PC-9 (cell line): ENCODE measurements at regions of chr9 and their contacts with region 1.

Region 1: DNA sequence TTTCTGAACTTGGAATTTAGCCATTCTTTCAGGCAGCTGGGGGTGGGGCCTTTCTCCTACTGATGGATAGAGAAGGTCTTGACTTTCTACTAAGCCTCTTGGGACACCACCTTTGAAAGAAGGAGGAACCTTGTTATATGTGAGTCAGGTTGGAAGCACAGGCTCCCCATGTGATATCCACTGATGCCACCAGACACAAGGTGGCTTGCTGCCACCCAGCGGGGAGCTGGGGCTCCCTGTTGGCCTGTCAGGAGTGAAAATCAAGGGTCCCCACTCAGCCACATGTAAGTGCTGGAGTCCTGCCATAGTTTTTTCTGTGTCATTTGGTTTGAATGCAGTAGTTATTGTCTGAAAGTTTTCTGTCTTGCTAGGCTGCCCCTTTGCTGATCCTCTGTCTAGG is 252.4 kb upstream of the NFIL3 start:
- DNase-seq: peak; percentile 51 to 64
- H3K4me3 ChIP-seq: no peak overlapping the region
- H3K27ac ChIP-seq: no peak overlapping the region
- H3K4me1 ChIP-seq: no peaks in the 10 kb centered on the region
- H3K27me3 ChIP-seq: no peaks in the 10 kb centered on the region
- CTCF ChIP-seq: peak; percentile 74

Region 2: DNA sequence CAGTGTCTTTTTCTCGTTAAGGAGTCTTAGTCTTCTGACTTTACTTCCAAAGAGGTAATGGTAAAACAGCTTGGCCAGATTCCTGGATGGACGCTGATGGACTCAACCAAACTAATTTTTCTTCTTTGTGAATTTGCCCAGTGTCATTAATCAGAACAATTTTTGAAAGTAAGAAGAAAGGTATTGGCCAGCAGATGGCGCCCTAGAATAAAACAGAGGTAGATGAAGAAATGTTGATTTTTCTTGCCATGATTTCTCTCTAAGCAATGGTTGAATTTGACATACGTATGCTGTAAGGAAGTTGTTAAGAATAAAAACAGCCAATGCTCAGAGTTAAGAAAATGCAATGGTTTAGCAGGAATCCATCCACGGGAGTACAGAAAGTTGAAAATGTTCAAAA is 1533.5 kb before region 1 on chr9:
- CTCF ChIA-PET with region 1: no interaction called
- POLR2A ChIA-PET with region 1: no interaction called
- intact Hi-C with region 1: loop called (anchors 5 kb)
- DNase-seq: peak in 1 of 2 experiments; percentile 36
- H3K4me3 ChIP-seq: no peak overlapping the region
- H3K27ac ChIP-seq: no peak overlapping the region
- H3K4me1 ChIP-seq: no peaks in the 10 kb centered on the region
- H3K27me3 ChIP-seq: peaks cover 19% of the 10 kb centered on the region
- CTCF ChIP-seq: peak; percentile 71

Region 3: GRCh38 chr9:91089405-91090129 is 586.5 kb before region 1 on chr9:
- CTCF ChIA-PET with region 1: no interaction called
- POLR2A ChIA-PET with region 1: no interaction called
- intact Hi-C with region 1: loop called (anchors 1 kb)
- DNase-seq: peak in 1 of 2 experiments; percentile 21
- H3K4me3 ChIP-seq: no peak overlapping the region
- H3K27ac ChIP-seq: no peak overlapping the region
- H3K4me1 ChIP-seq: no peaks in the 10 kb centered on the region
- H3K27me3 ChIP-seq: no peaks in the 10 kb centered on the region
- CTCF ChIP-seq: peak; percentile 47

Region 4: DNA sequence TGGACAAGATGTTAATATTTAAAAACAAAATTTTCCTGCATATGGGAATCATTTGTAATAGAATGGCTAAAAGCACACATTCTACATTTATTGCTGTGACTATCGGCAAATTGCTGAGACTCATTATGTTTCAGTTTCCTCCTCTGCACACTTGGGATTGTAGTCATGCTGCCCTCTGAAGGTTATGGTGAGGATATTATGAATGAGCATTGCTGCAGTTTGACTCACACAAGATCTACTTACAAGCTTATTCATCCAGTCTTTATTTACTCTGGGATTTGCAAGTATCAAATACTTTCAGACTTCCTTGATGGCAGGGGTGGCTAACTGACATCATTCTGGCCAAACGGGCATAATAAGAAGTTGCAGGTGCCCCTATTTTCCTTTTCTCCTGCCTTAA is 242.9 kb before region 1 on chr9:
- CTCF ChIA-PET with region 1: interaction called, 3 read pairs
- POLR2A ChIA-PET with region 1: no interaction called
- intact Hi-C with region 1: loop called (anchors 5 kb)
- DNase-seq: peak; percentile 38 to 96
- H3K4me3 ChIP-seq: no peak overlapping the region
- H3K27ac ChIP-seq: peak overlapping the region; percentile 32; the same call in 1 of the 2 replicates
- H3K4me1 ChIP-seq: peaks cover 8% of the 10 kb centered on the region; the same call in 1 of the 2 replicates
- H3K27me3 ChIP-seq: no peaks in the 10 kb centered on the region
- CTCF ChIP-seq: peak; percentile 64

Region 5: DNA sequence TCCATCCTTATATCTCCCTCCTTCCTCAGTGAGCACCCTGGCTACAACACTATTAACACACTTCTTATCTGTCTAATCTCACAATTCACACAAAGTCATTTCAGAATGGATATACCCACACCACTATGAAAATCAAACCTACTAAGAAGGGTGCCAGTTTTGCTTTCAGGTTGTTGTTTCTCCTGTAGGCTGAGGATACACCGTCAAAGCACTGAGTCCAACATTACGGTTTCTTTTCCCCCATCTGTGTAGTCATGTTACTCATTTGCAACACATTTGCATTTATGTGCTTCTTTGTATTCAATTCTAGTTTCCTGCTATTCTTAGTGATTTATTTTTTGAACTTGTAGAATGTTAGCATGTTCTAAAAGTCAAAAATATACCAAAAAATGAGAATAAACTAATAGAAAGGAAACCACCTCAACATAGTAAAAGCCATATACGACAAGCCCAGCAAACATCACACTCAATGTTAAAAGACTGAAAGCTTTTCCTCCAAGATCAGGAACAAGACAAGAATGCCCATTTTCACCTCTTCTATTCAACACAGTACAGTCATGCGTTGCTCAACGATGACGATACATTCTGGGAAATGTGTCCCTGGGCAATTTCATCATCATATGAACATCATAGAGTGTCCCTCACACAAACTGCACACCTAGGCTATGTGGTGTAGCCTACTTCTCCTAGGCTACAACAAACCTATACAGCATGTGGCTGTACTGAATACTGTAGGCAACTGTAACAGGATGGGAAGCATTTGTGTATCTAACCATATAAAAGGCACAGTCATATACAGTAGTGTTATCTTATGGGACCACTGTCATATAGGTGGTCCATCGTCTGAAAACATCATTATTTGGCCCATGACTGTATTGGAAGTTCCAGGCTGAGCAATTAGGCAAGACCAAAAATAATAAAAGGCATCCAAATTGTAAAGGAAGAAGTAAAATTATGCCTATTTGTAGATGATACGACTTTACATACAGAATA is 267.7 kb after region 1 on chr9:
- CTCF ChIA-PET with region 1: no interaction called
- POLR2A ChIA-PET with region 1: no interaction called
- intact Hi-C with region 1: no loop called
- DNase-seq: no peak
- H3K4me3 ChIP-seq: no peak overlapping the region
- H3K27ac ChIP-seq: no peak overlapping the region
- H3K4me1 ChIP-seq: no peaks in the 10 kb centered on the region
- H3K27me3 ChIP-seq: peaks cover 62% of the 10 kb centered on the region
- CTCF ChIP-seq: no peak

Region 6: DNA sequence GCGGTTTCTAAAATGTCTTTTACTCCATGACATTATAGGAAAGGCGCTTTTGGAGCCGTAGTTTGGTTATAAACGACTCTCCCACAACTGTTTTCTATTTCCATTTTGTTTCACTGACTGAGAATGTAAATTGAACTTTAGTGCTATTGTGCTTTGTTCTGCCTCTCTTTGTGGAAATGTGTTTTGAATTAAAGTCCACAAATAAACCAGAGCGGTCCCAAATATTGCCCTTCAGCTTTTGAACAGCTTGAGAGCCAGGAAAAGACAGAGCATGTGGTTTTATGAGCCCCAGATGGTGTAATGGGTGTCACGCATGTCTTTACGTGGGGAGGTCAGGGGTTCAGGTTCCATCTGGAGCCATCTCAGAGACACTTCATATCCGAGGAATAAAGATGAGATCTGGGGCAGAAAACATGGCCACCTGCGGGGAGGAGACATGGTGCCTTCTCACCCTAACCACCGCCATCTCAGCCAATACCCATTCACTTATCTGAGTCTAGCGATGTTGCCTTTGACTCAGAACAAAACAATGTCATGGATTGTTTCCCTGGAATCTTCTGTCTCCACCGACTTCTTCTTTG is 316.5 kb after region 1 on chr9:
- CTCF ChIA-PET with region 1: no interaction called
- POLR2A ChIA-PET with region 1: no interaction called
- intact Hi-C with region 1: no loop called
- DNase-seq: no peak
- H3K4me3 ChIP-seq: no peak overlapping the region
- H3K27ac ChIP-seq: no peak overlapping the region
- H3K4me1 ChIP-seq: no peaks in the 10 kb centered on the region
- H3K27me3 ChIP-seq: peaks cover 69% of the 10 kb centered on the region
- CTCF ChIP-seq: no peak